Endothelial cell of umbilical vein (primary cell): ENCODE measurements at regions of chr5 and their contacts with region 1.

Region 1: GRCh38 chr5:141618804-141619554 is at the start of gene DIAPH1:
- DNase-seq: peak; percentile 95
- H3K4me3 ChIP-seq: peak within 1 kb of the TSS; percentile 77 to 84 (median 80)
- H3K27ac ChIP-seq: peak within 1 kb of the TSS; percentile 22
- H3K4me1 ChIP-seq: peaks cover 18% of the 10 kb centered on the region
- H3K27me3 ChIP-seq: no peaks in the 10 kb centered on the region
- CTCF ChIP-seq: peak; percentile 98 to 99
- POLR2A ChIP-seq: peak; percentile 77
- total RNA-seq, gene DIAPH1: 103 and 105 TPM in 2 replicates

Region 2: GRCh38 chr5:141199359-141200235 is 419.4 kb before region 1 on chr5 and contains the start of gene PCDHB11:
- CTCF ChIA-PET with region 1: no interaction called
- POLR2A ChIA-PET with region 1: no interaction called
- dilution Hi-C with region 1: no loop called
- intact Hi-C with region 1: no loop called
- DNase-seq: peak; percentile 2
- H3K4me3 ChIP-seq: no peak within 1 kb of the TSS
- H3K27ac ChIP-seq: no peak within 1 kb of the TSS
- H3K4me1 ChIP-seq: no peaks in the 10 kb centered on the region
- H3K27me3 ChIP-seq: no peaks in the 10 kb centered on the region
- CTCF ChIP-seq: no peak
- POLR2A ChIP-seq: no peak
- total RNA-seq, gene PCDHB11: 0.16 and 0.18 TPM in 2 replicates

Region 3: GRCh38 chr5:141590127-141590526 is 28.9 kb before region 1 on chr5:
- CTCF ChIA-PET with region 1: interaction called, 1,019 read pairs
- POLR2A ChIA-PET with region 1: interaction called, 18 read pairs
- dilution Hi-C with region 1: no loop called
- intact Hi-C with region 1: loop called (anchors 1 kb)
- DNase-seq: no peak
- H3K4me3 ChIP-seq: no peak overlapping the region
- H3K27ac ChIP-seq: no peak overlapping the region
- H3K4me1 ChIP-seq: no peaks in the 10 kb centered on the region
- H3K27me3 ChIP-seq: no peaks in the 10 kb centered on the region
- CTCF ChIP-seq: no peak
- POLR2A ChIP-seq: no peak

Region 4: GRCh38 chr5:141598391-141599350 is 20.3 kb before region 1 on chr5:
- CTCF ChIA-PET with region 1: interaction called, 1,019 read pairs
- POLR2A ChIA-PET with region 1: no interaction called
- dilution Hi-C with region 1: no loop called
- intact Hi-C with region 1: no loop called
- DNase-seq: no peak
- H3K4me3 ChIP-seq: no peak overlapping the region
- H3K27ac ChIP-seq: no peak overlapping the region
- H3K4me1 ChIP-seq: peaks cover 16% of the 10 kb centered on the region
- H3K27me3 ChIP-seq: no peaks in the 10 kb centered on the region
- CTCF ChIP-seq: no peak
- POLR2A ChIP-seq: no peak

Region 5: DNA sequence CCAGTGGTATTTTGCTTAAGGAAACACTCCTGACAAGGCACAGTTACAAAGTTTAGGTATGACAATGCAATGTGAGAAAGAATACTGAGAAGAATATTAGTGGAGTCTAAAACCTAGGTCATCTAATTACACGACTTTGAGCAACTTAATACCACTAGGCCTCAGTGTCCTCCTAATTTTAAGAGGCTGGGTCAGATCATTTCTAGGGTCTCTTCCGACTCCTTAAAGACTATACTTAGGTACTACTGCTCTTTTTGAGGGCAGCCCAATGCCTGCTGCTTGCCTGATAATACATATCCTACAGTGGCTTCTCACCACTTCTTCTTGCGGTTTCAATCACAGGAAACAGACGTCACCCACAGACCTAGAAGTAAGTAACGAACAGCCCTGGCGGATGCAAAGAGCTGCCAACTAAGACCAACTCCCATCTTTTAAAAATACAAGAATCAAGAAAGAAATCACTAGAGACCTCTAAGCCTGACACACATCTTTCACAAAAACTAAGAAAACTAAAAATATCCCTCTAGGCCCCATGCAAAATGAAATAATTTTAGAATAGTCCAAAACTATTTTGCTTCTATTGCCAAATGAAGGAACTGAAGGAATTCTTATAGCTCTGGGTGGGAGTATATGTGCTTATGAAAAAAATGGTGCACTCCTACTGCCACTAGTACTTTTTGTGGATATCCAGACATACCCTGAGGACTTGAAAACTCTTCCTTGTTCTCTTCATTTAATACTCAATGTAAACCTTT is 13.3 kb before region 1 on chr5:
- CTCF ChIA-PET with region 1: interaction called, 114 read pairs
- POLR2A ChIA-PET with region 1: no interaction called
- dilution Hi-C with region 1: no loop called
- intact Hi-C with region 1: loop called (anchors 1 kb)
- DNase-seq: peak; percentile 88
- H3K4me3 ChIP-seq: no peak overlapping the region
- H3K27ac ChIP-seq: peak overlapping the region; percentile 78
- H3K4me1 ChIP-seq: peaks cover 28% of the 10 kb centered on the region
- H3K27me3 ChIP-seq: no peaks in the 10 kb centered on the region
- CTCF ChIP-seq: no peak
- POLR2A ChIP-seq: no peak

Region 6: GRCh38 chr5:141636413-141637122 is 17.6 kb after region 1 on chr5 and contains the starts of genes HDAC3 and RELL2:
- CTCF ChIA-PET with region 1: interaction called, 163 read pairs
- POLR2A ChIA-PET with region 1: interaction called, 7 read pairs
- dilution Hi-C with region 1: no loop called
- intact Hi-C with region 1: loop called (anchors 1 kb)
- DNase-seq: peak; percentile 95
- H3K4me3 ChIP-seq: peak within 1 kb of the TSS; percentile 75 to 82 (median 77)
- H3K27ac ChIP-seq: peak within 1 kb of the TSS; percentile 38
- H3K4me1 ChIP-seq: peaks cover 21% of the 10 kb centered on the region
- H3K27me3 ChIP-seq: no peaks in the 10 kb centered on the region
- CTCF ChIP-seq: no peak
- POLR2A ChIP-seq: peak; percentile 88
- total RNA-seq, gene HDAC3: 58.5 and 60.2 TPM in 2 replicates
- total RNA-seq, gene RELL2: 3.1 and 3.6 TPM in 2 replicates

Region 7: GRCh38 chr5:142334538-142334937 is 715.6 kb after region 1 on chr5:
- CTCF ChIA-PET with region 1: no interaction called
- POLR2A ChIA-PET with region 1: no interaction called
- dilution Hi-C with region 1: no loop called
- intact Hi-C with region 1: no loop called
- DNase-seq: no peak
- H3K4me3 ChIP-seq: no peak overlapping the region
- H3K27ac ChIP-seq: no peak overlapping the region
- H3K4me1 ChIP-seq: no peaks in the 10 kb centered on the region
- H3K27me3 ChIP-seq: no peaks in the 10 kb centered on the region
- CTCF ChIP-seq: no peak
- POLR2A ChIP-seq: no peak